ENCODE measurements at regions of chr1 and their contacts with region 1.

Region 1: DNA sequence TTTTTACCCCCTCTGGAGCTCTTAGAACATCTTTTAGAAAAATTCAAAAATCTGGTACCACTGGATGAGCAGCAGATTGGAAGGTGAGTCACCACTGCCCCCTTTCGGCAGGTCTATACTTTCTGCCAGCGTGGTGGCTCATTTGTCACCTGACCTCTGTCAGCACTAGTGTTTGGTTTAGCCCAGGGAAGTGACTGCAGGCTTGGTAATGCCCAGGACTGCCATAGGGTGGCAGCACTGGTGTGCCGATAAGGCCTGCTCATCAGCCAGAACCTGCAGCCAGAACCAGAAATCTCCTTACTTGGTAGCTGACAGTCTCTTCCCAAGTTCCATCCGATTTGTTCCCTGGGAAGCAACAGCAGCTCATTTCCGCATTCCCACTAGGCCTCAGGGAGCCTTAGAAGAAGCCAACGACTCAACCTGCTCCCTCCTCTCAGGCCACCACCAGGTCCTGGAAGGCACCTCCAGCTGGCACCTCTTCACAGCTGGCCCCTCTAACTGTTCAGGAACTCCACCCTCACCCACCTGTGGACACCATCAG is 6.8 kb downstream of the SMIM12 start:
- DNase-seq: peak; percentile 70 to 95 (median 88)
- ATAC-seq: peak; percentile 100
- H3K4me3 ChIP-seq: no peak overlapping the region
- H3K4me3 Mint-ChIP-seq: no peak overlapping the region
- H3K27ac ChIP-seq: peak overlapping the region; percentile 4
- H3K27ac Mint-ChIP-seq: peak overlapping the region; percentile 30 to 36
- H3K4me1 ChIP-seq: peaks cover 0 to 8% of the 10 kb centered on the region in 2 experiments
- H3K4me1 Mint-ChIP-seq: peaks cover 25 to 36% (median 35%) of the 10 kb centered on the region in 3 donors
- H3K27me3 ChIP-seq: no peaks in the 10 kb centered on the region
- H3K27me3 Mint-ChIP-seq: no peaks in the 10 kb centered on the region

Region 2: GRCh38 chr1:34742667-34743270 is 110.0 kb before region 1 on chr1:
- CTCF ChIA-PET with region 1: no interaction called
- POLR2A ChIA-PET with region 1: no interaction called
- DNase-seq: peak; percentile 22 to 81 (median 63)
- ATAC-seq: peak; percentile 82 to 86 (median 86)
- H3K4me3 ChIP-seq: no peak overlapping the region
- H3K4me3 Mint-ChIP-seq: no peak overlapping the region
- H3K27ac ChIP-seq: no peak overlapping the region
- H3K27ac Mint-ChIP-seq: no peak overlapping the region
- H3K4me1 ChIP-seq: peaks cover 0 to 6% of the 10 kb centered on the region in 2 experiments
- H3K4me1 Mint-ChIP-seq: peaks cover 3 to 8% (median 3%) of the 10 kb centered on the region in 3 donors
- H3K27me3 ChIP-seq: peaks cover 0 to 38% of the 10 kb centered on the region in 2 experiments
- H3K27me3 Mint-ChIP-seq: peaks cover 6 to 8% of the 10 kb centered on the region in 2 donors

Region 3: GRCh38 chr1:34865981-34866761 is 13.4 kb after region 1 on chr1:
- CTCF ChIA-PET with region 1: interaction called, 12 to 37 read pairs
- POLR2A ChIA-PET with region 1: no interaction called
- DNase-seq: peak; percentile 72 to 96 (median 88)
- ATAC-seq: peak; percentile 79 to 88 (median 82)
- H3K4me3 ChIP-seq: peak overlapping the region; percentile 59 to 65
- H3K4me3 Mint-ChIP-seq: peak overlapping the region; percentile 82 to 87 (median 86)
- H3K27ac ChIP-seq: peak overlapping the region; percentile 67
- H3K27ac Mint-ChIP-seq: peak overlapping the region; percentile 84 to 86
- H3K4me1 ChIP-seq: peaks cover 25 to 49% of the 10 kb centered on the region in 2 experiments
- H3K4me1 Mint-ChIP-seq: peaks cover 37 to 50% (median 40%) of the 10 kb centered on the region in 3 donors
- H3K27me3 ChIP-seq: peaks cover 0 to 6% of the 10 kb centered on the region in 2 experiments
- H3K27me3 Mint-ChIP-seq: peaks cover under 1 to 3% of the 10 kb centered on the region in 2 donors

Region 4: GRCh38 chr1:34946211-34946610 is 93.5 kb after region 1 on chr1:
- CTCF ChIA-PET with region 1: no interaction called
- POLR2A ChIA-PET with region 1: no interaction called
- DNase-seq: no peak
- ATAC-seq: no peak
- H3K4me3 ChIP-seq: no peak overlapping the region
- H3K4me3 Mint-ChIP-seq: no peak overlapping the region
- H3K27ac ChIP-seq: no peak overlapping the region
- H3K27ac Mint-ChIP-seq: no peak overlapping the region
- H3K4me1 ChIP-seq: no peaks in the 10 kb centered on the region
- H3K4me1 Mint-ChIP-seq: no peaks in the 10 kb centered on the region
- H3K27me3 ChIP-seq: peaks cover 3 to 13% of the 10 kb centered on the region in 2 experiments
- H3K27me3 Mint-ChIP-seq: peaks cover 16 to 25% of the 10 kb centered on the region in 2 donors